Mammary epithelial cell (primary cell): ENCODE measurements at regions of chr9 and their contacts with region 1.

Region 1: DNA sequence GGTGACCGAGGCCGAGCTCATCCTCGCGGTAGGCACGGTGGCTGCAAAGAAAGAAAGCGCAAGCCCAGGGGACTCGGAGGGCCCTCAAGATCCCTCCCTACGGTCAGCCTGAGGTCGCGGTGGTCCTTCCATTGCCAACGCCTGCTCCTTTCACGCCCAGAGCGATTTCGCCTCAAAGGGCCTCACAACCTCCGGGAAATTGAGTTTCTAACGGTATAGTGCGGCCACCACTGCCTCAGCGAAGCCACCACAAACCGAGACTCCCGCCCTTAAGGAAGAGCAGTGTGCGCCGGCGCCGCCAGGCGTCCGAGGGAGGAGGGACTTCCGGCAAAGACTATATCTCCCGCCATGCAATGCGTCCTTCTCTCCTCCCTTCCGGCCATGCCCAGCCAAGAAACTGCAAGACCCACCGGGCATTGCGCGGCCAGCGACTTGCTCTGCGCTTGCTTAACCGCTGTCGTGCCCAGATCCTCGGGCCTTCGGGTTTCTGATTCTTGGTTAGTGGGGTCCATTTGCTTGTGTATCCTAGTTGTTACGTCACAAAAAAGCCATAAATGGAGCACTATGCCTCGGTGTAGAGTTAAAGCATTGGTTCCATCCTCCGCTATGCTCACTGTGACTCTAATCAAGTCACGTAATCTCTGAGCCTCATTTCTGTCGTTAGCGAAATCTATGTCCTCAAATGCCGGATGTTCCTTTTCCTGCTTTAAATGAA is at the start of gene HAUS6:
- DNase-seq: peak; percentile 93
- H3K4me3 ChIP-seq: peak within 1 kb of the TSS; percentile 68 to 93 (median 92)
- H3K27ac ChIP-seq: peak within 1 kb of the TSS; percentile 91
- H3K4me1 ChIP-seq: peaks cover 21% of the 10 kb centered on the region
- H3K27me3 ChIP-seq: no peaks in the 10 kb centered on the region
- CTCF ChIP-seq: peak in 1 of 2 donors; percentile 60
- total RNA-seq, gene HAUS6: 19.5 to 21.2 TPM

Region 2: GRCh38 chr9:18969128-18969527 is 133.7 kb before region 1 on chr9:
- CTCF ChIA-PET with region 1: no interaction called
- dilution Hi-C with region 1: no loop called
- in situ Hi-C with region 1: no loop called
- intact Hi-C with region 1: no loop called
- DNase-seq: no peak
- H3K4me3 ChIP-seq: no peak overlapping the region
- H3K27ac ChIP-seq: no peak overlapping the region
- H3K4me1 ChIP-seq: no peaks in the 10 kb centered on the region
- H3K27me3 ChIP-seq: no peaks in the 10 kb centered on the region
- CTCF ChIP-seq: no peak

Region 3: DNA sequence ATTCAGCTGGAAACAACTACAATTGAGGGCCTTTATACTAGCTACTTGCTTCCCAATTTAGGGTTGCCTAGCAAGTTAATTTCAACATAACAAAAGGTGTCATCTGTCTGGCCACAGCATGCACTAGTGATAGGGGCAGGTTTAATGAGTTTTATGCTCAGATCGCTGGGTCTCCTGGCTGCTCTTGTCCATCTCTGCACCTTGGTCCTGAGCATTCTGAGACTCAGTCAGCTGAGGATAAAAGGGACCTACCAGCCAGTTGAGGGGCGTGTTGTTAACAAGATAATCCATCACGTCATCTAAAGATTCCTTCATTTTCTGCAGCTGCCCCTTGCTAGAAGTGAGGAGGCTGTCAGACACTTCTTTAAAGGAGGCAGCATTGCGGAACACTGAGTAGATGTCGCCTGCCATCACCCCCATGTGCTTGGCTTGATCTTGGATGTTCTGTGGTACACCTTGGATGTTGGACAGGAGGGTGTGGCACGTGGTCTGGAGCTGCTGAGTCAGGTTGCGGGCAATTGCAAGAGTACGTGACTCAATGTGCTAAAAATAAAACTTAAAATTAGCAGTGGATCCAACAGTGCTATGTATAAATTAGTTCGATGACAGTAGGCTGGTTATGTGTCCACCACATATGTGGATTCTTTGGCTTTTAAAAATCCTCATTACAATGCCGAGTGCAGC is 13.5 kb after region 1 on chr9:
- CTCF ChIA-PET with region 1: no interaction called
- dilution Hi-C with region 1: no loop called
- in situ Hi-C with region 1: no loop called
- intact Hi-C with region 1: loop called (anchors 1 kb)
- DNase-seq: peak; percentile 82
- H3K4me3 ChIP-seq: no peak overlapping the region
- H3K27ac ChIP-seq: no peak overlapping the region
- H3K4me1 ChIP-seq: peaks cover 38% of the 10 kb centered on the region
- H3K27me3 ChIP-seq: no peaks in the 10 kb centered on the region
- CTCF ChIP-seq: no peak

Region 4: GRCh38 chr9:19161257-19162025 is 58.7 kb after region 1 on chr9:
- CTCF ChIA-PET with region 1: no interaction called
- dilution Hi-C with region 1: no loop called
- in situ Hi-C with region 1: no loop called
- intact Hi-C with region 1: loop called (anchors 1 kb)
- DNase-seq: peak; percentile 98
- H3K4me3 ChIP-seq: no peak overlapping the region
- H3K27ac ChIP-seq: peak overlapping the region; percentile 58
- H3K4me1 ChIP-seq: peaks cover 16% of the 10 kb centered on the region
- H3K27me3 ChIP-seq: no peaks in the 10 kb centered on the region
- CTCF ChIP-seq: no peak

Region 5: DNA sequence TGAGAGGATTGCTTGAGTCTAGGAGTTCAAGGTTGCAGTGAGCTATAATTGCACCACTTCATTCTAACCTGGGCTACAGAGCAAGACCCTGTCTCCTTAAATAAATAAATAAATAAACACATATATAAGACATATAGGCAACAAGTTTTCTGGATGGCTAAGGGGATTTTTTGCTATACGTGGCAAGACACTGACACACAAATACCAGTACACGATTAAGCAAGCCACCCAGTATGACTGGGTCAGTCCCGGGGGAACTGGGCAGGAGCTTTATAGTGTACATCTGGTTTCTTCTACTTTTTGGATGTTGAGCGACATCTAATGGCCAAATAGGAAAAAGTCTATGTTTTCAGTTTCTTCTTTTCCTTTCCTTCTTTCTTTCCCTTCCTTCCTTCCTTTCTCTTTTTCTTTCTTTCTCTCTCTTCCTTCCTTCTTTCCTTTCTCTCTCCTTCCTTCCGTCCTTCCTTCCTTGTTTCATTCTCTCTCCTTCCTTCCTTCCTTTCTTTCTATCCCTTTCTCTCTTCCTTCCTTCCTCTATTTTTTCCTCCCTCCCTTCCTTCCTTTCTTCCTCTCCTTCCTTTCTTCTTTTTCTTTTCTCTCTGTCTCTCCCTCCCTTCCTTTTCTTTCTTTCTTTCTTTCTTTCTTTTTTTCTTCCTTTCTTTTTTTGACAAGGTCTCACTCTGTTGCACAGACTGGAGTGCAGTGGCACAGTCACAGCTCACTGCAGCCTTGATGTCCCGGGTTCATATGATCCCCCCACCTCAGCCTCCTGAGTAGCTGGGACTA is 71.5 kb after region 1 on chr9:
- CTCF ChIA-PET with region 1: interaction called, 5 read pairs
- dilution Hi-C with region 1: no loop called
- in situ Hi-C with region 1: loop called in 1 of 2 experiments (anchors 5 kb)
- intact Hi-C with region 1: loop called (anchors 1 kb)
- DNase-seq: peak; percentile 78
- H3K4me3 ChIP-seq: no peak overlapping the region
- H3K27ac ChIP-seq: peak overlapping the region; percentile 31
- H3K4me1 ChIP-seq: no peaks in the 10 kb centered on the region
- H3K27me3 ChIP-seq: no peaks in the 10 kb centered on the region
- CTCF ChIP-seq: peak; percentile 32 to 61

Region 6: GRCh38 chr9:20242510-20243189 is 1139.9 kb after region 1 on chr9:
- CTCF ChIA-PET with region 1: no interaction called
- dilution Hi-C with region 1: no loop called
- in situ Hi-C with region 1: loop called in 1 of 2 experiments (anchors 25 kb)
- intact Hi-C with region 1: no loop called
- DNase-seq: no peak
- H3K4me3 ChIP-seq: no peak overlapping the region
- H3K27ac ChIP-seq: no peak overlapping the region
- H3K4me1 ChIP-seq: peaks cover 6% of the 10 kb centered on the region
- H3K27me3 ChIP-seq: no peaks in the 10 kb centered on the region
- CTCF ChIP-seq: no peak